Heart right ventricle (tissue), 16 donors: ENCODE measurements at regions of chr22 and their contacts with region 1.

Region 1: GRCh38 chr22:35921777-35922176 is 106.8 kb downstream of the RBFOX2 start:
- DNase-seq: peak in 1 of 2 donors; percentile 82
- ATAC-seq: peak; percentile 81 to 94 (median 90)
- H3K4me3 ChIP-seq: no peak overlapping the region
- H3K27ac ChIP-seq: peak overlapping the region in 6 of 10 donors; percentile 33 to 93 (median 58)
- H3K4me1 ChIP-seq: peaks cover 0 to 74% (median 53%) of the 10 kb centered on the region in 9 donors
- H3K27me3 ChIP-seq: no peaks in the 10 kb centered on the region
- CTCF ChIP-seq: peak; percentile 34 to 88 (median 75)

Region 2: DNA sequence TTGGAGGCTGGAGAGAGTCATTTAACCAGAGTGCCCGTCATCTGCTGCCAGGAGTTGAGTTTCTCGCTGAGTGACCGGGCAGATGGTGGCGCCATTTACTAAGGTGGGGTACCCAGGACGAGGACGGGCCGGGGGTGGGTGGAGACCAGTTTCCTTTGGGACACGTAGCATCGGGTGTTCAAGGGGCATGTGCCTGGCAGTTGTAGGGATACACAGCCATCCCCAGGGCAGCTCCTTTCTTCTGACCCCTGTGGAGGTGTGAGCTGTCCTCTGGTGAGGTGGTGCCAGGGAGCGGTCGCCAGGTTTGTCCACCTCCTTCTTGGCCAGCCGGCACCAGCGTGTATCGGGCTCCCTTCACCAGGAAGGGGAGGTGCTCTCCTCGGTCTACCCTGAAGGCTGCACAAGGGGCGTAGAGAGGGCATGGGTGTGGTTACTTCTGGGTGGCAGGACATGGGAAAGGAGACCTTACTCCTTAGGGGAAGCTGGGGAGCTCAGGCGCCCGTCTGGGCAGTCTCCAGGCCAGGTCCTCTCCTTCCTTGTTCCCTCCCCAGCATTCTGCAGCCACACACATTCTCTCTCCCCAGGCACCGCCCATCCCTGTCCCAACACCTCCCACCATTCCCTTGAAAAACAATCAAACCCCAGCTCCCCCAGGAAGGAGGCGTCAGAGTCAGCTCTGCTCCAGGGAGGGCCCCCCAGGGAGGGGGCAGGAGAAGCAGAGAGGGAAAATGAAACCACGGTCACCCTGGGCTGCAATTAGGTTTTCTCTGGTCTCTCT is 294.3 kb before region 1 on chr22:
- intact Hi-C with region 1: loop called (anchors 1 to 10 kb)
- DNase-seq: peak; percentile 79 to 85
- ATAC-seq: peak; percentile 69 to 84 (median 78)
- H3K4me3 ChIP-seq: peak overlapping the region in 9 of 10 donors; percentile 28 to 71 (median 61)
- H3K27ac ChIP-seq: peak overlapping the region; percentile 11 to 93 (median 84)
- H3K4me1 ChIP-seq: peaks cover 3 to 37% (median 20%) of the 10 kb centered on the region in 9 donors
- H3K27me3 ChIP-seq: no peaks in the 10 kb centered on the region
- CTCF ChIP-seq: peak; percentile 17 to 75 (median 53)

Region 3: GRCh38 chr22:35739076-35739930 is 182.5 kb before region 1 on chr22:
- intact Hi-C with region 1: loop called in 2 of 10 experiments (anchors 5 kb)
- DNase-seq: no peak
- ATAC-seq: peak in 2 of 8 donors; percentile 31 to 40
- H3K4me3 ChIP-seq: no peak overlapping the region
- H3K27ac ChIP-seq: peak overlapping the region in 1 of 10 donors; percentile 9
- H3K4me1 ChIP-seq: peaks cover 0 to 53% (median 31%) of the 10 kb centered on the region in 9 donors
- H3K27me3 ChIP-seq: no peaks in the 10 kb centered on the region
- CTCF ChIP-seq: peak in 7 of 9 donors; percentile 19 to 53 (median 26)

Region 4: GRCh38 chr22:35766654-35767580 is 154.9 kb before region 1 on chr22:
- intact Hi-C with region 1: loop called in 6 of 10 experiments (anchors 5 to 10 kb)
- DNase-seq: no peak
- ATAC-seq: peak in 7 of 8 donors; percentile 50 to 75 (median 71)
- H3K4me3 ChIP-seq: peak overlapping the region in 1 of 10 donors; percentile 20
- H3K27ac ChIP-seq: peak overlapping the region in 7 of 10 donors; percentile 0 to 46 (median 18)
- H3K4me1 ChIP-seq: peaks cover 0 to 31% (median 8%) of the 10 kb centered on the region in 9 donors
- H3K27me3 ChIP-seq: no peaks in the 10 kb centered on the region
- CTCF ChIP-seq: no peak